Endothelial cell of umbilical vein (primary cell): ENCODE measurements at regions of chr22 and their contacts with region 1.

Region 1: GRCh38 chr22:20507253-20508066 is at the start of gene MED15:
- DNase-seq: peak; percentile 87
- H3K4me3 ChIP-seq: peak within 1 kb of the TSS; percentile 55 to 88 (median 63)
- H3K27ac ChIP-seq: peak within 1 kb of the TSS; percentile 84
- H3K4me1 ChIP-seq: peaks cover 33% of the 10 kb centered on the region
- H3K27me3 ChIP-seq: no peaks in the 10 kb centered on the region
- CTCF ChIP-seq: no peak
- POLR2A ChIP-seq: peak; percentile 89
- total RNA-seq, gene MED15: 126 and 138 TPM in 2 replicates

Region 2: DNA sequence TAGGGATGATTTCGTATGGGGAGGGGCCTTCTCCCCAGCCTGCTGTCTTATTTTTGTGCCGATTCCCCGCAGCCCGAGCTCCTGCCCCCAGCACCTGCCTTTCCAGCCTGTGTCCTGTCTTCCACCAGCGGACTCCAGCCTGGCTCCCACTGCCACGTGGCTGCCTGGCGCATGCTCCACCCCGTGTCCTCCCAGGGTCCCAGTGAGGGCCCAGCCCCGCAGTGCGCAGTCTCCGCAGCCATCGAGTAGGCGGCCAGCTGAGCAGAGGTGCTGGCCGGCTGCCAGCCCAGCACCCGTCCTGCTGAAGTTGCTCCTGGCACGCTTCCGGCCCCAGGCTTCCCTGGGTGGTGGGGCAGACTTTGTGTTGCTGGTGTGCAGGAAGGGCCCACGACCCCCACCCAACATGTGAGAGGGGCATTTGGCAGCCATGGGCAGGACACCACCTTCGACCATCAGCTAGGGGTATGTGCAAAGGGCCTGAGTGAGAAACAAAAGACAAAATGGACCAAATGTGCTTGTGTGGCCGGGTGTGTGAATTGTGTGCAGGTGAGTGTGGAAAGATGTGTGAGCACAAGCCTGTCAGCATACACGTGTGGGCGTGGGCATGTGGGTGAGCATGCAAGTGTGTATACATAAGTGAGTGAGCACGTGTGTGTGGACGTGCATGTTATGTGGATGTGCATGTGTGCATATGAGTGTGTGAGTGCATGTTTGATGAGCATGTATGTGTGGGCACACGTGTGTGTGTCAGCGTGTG is 295.3 kb before region 1 on chr22:
- CTCF ChIA-PET with region 1: no interaction called
- POLR2A ChIA-PET with region 1: no interaction called
- dilution Hi-C with region 1: no loop called
- intact Hi-C with region 1: no loop called
- DNase-seq: no peak
- H3K4me3 ChIP-seq: no peak overlapping the region
- H3K27ac ChIP-seq: no peak overlapping the region
- H3K4me1 ChIP-seq: peaks cover 1% of the 10 kb centered on the region
- H3K27me3 ChIP-seq: no peaks in the 10 kb centered on the region
- CTCF ChIP-seq: no peak
- POLR2A ChIP-seq: no peak

Region 3: GRCh38 chr22:20495861-20496681 is 11.4 kb before region 1 on chr22:
- CTCF ChIA-PET with region 1: interaction called, 5 read pairs
- POLR2A ChIA-PET with region 1: no interaction called
- dilution Hi-C with region 1: no loop called
- intact Hi-C with region 1: loop called (anchors 1 kb)
- DNase-seq: peak; percentile 91
- H3K4me3 ChIP-seq: peak overlapping the region; percentile 62 to 77 (median 74)
- H3K27ac ChIP-seq: peak overlapping the region; percentile 85
- H3K4me1 ChIP-seq: peaks cover 12% of the 10 kb centered on the region
- H3K27me3 ChIP-seq: no peaks in the 10 kb centered on the region
- CTCF ChIP-seq: peak; percentile 87 to 91
- POLR2A ChIP-seq: peak; percentile 93

Region 4: DNA sequence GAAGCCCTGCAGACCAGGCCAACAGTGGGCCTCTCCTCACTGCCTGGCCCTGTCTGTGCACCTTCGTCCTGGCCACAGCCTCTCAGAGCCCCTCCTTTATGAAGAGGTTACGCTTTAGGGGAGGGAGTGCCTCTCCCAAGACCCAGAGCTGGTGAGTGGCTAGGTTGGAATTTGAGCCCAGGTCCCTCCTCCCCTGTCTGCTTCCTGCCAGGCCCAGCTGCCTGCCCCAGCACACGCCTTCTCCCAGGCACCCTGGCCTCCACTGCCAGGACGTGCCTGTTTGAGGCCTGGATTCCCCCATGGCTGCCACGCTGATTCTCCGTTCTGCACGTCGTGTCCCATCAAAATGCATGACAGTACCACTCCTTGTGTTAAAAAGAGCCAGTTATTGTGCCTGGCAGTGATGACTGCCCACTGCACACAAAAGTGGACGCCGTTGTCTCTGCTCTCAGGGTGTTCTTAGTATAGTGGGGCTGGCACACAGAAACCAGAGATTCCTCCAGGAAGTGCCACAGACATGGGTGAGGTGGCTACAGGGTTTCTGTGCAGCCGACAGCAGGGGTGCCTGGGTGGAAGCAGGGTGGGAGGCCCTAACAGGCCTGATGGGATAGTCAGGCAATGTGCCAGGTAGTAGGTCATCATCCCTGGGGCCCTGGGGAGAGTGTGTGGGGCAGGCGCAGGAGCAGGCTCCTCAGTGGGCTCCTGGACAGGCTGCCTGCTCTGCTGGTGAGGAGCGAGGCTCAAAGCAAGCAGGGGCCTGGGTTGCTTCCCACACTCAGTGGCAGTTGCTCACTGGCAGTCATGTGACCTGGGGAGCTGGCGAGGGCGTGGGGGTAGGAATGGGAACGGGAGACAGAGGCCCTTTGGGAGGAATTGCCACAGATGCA is 24.1 kb after region 1 on chr22:
- CTCF ChIA-PET with region 1: interaction called, 5 read pairs
- POLR2A ChIA-PET with region 1: interaction called, 5 read pairs
- dilution Hi-C with region 1: no loop called
- intact Hi-C with region 1: loop called (anchors 1 kb)
- DNase-seq: peak; percentile 64
- H3K4me3 ChIP-seq: no peak overlapping the region
- H3K27ac ChIP-seq: peak overlapping the region; percentile 75
- H3K4me1 ChIP-seq: peaks cover 41% of the 10 kb centered on the region
- H3K27me3 ChIP-seq: no peaks in the 10 kb centered on the region
- CTCF ChIP-seq: no peak
- POLR2A ChIP-seq: no peak

Region 5: DNA sequence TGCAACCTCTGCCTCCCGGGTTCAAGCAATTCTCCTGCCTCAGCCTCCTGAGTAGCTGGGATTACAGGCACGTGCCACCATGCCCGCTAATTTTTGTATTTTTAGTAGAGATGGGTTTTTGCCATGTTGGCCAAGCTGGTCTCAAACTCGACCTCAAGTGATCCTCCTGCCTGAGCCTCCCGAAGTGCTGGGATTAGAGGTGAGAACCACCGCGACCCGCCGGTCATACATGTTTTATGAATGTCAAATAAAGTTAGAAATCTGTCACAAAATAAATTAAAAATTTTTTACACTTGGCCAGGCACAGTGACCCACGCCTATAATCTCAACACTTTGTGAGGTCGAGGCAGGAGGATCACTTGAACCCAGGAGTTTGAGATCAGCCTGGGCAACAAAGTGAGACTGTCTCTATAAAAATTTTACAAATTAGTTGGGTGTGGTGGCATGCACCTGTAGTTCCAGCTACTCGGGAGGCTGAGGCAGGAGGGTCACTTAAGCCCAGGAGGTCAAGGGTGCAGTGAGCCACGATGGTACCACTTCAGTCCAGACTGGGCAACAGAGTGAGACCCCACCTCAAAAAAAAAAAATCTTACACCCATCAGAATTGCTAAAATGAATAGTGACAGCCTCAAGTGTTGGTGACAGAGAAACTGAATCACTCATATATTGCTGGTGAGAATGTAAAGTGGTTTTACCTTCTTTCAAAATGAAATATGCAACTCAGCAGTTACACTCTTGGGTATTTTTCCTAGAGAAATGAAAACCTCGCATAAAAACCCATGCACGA is 55.2 kb after region 1 on chr22:
- CTCF ChIA-PET with region 1: interaction called, 15 read pairs
- POLR2A ChIA-PET with region 1: no interaction called
- dilution Hi-C with region 1: no loop called
- intact Hi-C with region 1: loop called (anchors 2 kb)
- DNase-seq: no peak
- H3K4me3 ChIP-seq: no peak overlapping the region
- H3K27ac ChIP-seq: no peak overlapping the region
- H3K4me1 ChIP-seq: no peaks in the 10 kb centered on the region
- H3K27me3 ChIP-seq: no peaks in the 10 kb centered on the region
- CTCF ChIP-seq: no peak
- POLR2A ChIP-seq: no peak

Region 6: GRCh38 chr22:20568989-20569769 is 61.7 kb after region 1 on chr22:
- CTCF ChIA-PET with region 1: interaction called, 15 read pairs
- POLR2A ChIA-PET with region 1: no interaction called
- dilution Hi-C with region 1: no loop called
- intact Hi-C with region 1: no loop called
- DNase-seq: no peak
- H3K4me3 ChIP-seq: no peak overlapping the region
- H3K27ac ChIP-seq: no peak overlapping the region
- H3K4me1 ChIP-seq: no peaks in the 10 kb centered on the region
- H3K27me3 ChIP-seq: no peaks in the 10 kb centered on the region
- CTCF ChIP-seq: no peak
- POLR2A ChIP-seq: no peak